AG04450 (cell line): ENCODE measurements at regions of chr7 and their contacts with region 1.

Region 1: GRCh38 chr7:118153551-118154177 is 30.3 kb upstream of the LSM8 start:
- DNase-seq: no peak
- H3K4me3 ChIP-seq: no peak overlapping the region
- H3K27ac ChIP-seq: no peak overlapping the region
- H3K27me3 ChIP-seq: no peaks in the 10 kb centered on the region
- CTCF ChIP-seq: peak; percentile 51

Region 2: GRCh38 chr7:117750612-117751563 is 402.8 kb before region 1 on chr7:
- CTCF ChIA-PET with region 1: interaction called, 12 read pairs
- POLR2A ChIA-PET with region 1: no interaction called
- DNase-seq: no peak
- H3K4me3 ChIP-seq: no peak overlapping the region
- H3K27ac ChIP-seq: no peak overlapping the region
- H3K27me3 ChIP-seq: no peaks in the 10 kb centered on the region
- CTCF ChIP-seq: peak; percentile 67

Region 3: GRCh38 chr7:118040562-118040961 is 113.1 kb before region 1 on chr7:
- CTCF ChIA-PET with region 1: no interaction called
- POLR2A ChIA-PET with region 1: no interaction called
- DNase-seq: no peak
- H3K4me3 ChIP-seq: no peak overlapping the region
- H3K27ac ChIP-seq: no peak overlapping the region
- H3K27me3 ChIP-seq: no peaks in the 10 kb centered on the region
- CTCF ChIP-seq: no peak

Region 4: DNA sequence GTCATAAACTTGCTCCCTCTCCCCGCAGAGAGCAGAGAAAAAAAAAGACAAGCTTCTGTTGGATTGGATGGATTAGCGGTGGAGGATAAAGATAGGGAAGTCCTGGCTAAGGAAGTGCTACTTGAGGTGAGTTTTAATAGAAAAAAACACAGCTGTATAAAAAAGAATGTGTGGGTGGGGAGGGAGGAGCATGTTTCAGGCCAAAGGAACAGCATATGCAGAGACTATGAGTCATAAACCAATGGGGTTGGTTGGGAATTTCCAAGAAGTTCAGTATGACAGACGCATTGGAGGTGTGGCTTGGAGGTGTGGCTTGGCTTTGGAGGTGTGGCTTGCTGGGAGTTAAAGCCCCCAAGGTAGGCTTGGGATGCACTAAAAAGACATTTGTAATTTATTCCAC is 72.7 kb before region 1 on chr7:
- CTCF ChIA-PET with region 1: no interaction called
- POLR2A ChIA-PET with region 1: no interaction called
- DNase-seq: peak; percentile 11
- H3K4me3 ChIP-seq: no peak overlapping the region
- H3K27ac ChIP-seq: no peak overlapping the region
- H3K27me3 ChIP-seq: no peaks in the 10 kb centered on the region
- CTCF ChIP-seq: no peak

Region 5: GRCh38 chr7:118169146-118169545 is 15.5 kb after region 1 on chr7:
- CTCF ChIA-PET with region 1: interaction called, 10 read pairs
- POLR2A ChIA-PET with region 1: no interaction called
- DNase-seq: no peak
- H3K4me3 ChIP-seq: no peak overlapping the region
- H3K27ac ChIP-seq: no peak overlapping the region
- H3K27me3 ChIP-seq: no peaks in the 10 kb centered on the region
- CTCF ChIP-seq: peak; percentile 34; the same call in 1 of the 2 replicates

Region 6: DNA sequence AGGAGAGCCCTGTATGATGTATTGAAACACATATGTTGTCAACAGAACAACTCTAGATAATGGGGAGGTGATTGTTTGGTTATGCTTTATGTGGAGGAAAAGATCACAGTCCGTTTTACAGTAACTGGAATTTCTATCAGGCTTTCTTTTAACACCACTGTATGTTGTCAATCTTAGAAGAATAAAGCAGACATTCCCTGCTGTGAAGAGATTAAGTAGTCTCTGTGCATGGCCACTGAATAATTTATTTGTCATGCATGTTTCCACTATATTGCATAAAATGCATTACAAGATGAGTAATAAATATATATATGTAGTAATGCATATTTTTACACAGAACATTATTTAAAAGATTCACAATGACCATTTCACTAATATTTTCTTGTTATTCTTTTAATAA is 510.8 kb after region 1 on chr7:
- CTCF ChIA-PET with region 1: no interaction called
- POLR2A ChIA-PET with region 1: no interaction called
- DNase-seq: no peak
- H3K4me3 ChIP-seq: no peak overlapping the region
- H3K27ac ChIP-seq: no peak overlapping the region
- H3K27me3 ChIP-seq: no peaks in the 10 kb centered on the region
- CTCF ChIP-seq: no peak